ENCODE measurements at regions of chr10 and their contacts with region 1.

Region 1: GRCh38 chr10:60032723-60033122 is 126.4 kb upstream of the CCDC6 start:
- DNase-seq: peak; percentile 60
- H3K4me3 ChIP-seq: no peak overlapping the region
- H3K27ac ChIP-seq: no peak overlapping the region
- H3K4me1 ChIP-seq: peaks cover 0 to 22% (median 8%) of the 10 kb centered on the region in 4 donors
- H3K27me3 ChIP-seq: no peaks in the 10 kb centered on the region
- CTCF ChIP-seq: peak; percentile 21 to 65 (median 47)
- EP300 ChIP-seq: no peak
- POLR2A ChIP-seq: no peak

Region 2: GRCh38 chr10:59700709-59701108 is 332.0 kb before region 1 on chr10:
- in situ Hi-C with region 1: no loop called
- intact Hi-C with region 1: no loop called
- DNase-seq: no peak
- H3K4me3 ChIP-seq: no peak overlapping the region
- H3K27ac ChIP-seq: no peak overlapping the region
- H3K4me1 ChIP-seq: peaks cover 0 to 4% (median 0%) of the 10 kb centered on the region in 4 donors
- H3K27me3 ChIP-seq: no peaks in the 10 kb centered on the region
- CTCF ChIP-seq: no peak
- EP300 ChIP-seq: no peak
- POLR2A ChIP-seq: no peak

Region 3: DNA sequence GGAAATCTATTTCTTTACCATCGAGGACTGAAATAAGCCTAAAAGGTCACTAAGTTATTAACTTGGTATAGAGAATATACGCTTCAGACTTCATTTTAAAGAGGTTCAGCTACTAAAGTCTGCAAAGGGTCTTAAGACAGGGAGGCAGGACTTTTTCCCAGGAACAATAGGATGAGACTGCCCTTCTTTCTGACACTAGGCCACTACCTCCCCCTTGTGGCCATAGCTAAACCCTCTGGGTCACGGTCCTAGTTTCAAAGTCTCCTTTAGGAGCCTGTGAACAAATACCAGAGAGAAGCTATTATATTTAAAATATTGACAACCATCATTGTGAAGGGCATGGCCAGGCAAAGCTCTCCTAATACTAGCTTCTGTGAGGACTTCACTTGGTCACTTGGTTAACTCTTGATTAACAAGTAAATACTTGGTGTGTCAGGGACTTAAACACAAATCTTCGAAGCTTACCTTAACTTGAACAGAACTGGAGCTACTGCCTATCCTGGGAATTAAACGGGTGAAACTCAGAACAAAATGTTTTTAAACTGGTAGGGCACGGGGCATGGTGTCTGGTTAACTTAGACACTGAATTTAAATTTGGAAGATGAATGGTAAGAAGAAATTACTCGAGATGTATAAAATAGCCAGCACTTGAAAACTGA is 202.0 kb before region 1 on chr10:
- in situ Hi-C with region 1: loop called in 3 of 4 experiments (anchors 10 to 25 kb)
- intact Hi-C with region 1: no loop called
- DNase-seq: peak; percentile 46
- H3K4me3 ChIP-seq: no peak overlapping the region
- H3K27ac ChIP-seq: no peak overlapping the region
- H3K4me1 ChIP-seq: peaks cover 4 to 23% (median 14%) of the 10 kb centered on the region in 4 donors
- H3K27me3 ChIP-seq: no peaks in the 10 kb centered on the region
- CTCF ChIP-seq: peak; percentile 46 to 79 (median 75)
- EP300 ChIP-seq: no peak
- POLR2A ChIP-seq: no peak

Region 4: GRCh38 chr10:60172363-60172990 is 139.8 kb after region 1 on chr10:
- in situ Hi-C with region 1: no loop called
- intact Hi-C with region 1: no loop called
- DNase-seq: no peak
- H3K4me3 ChIP-seq: no peak overlapping the region
- H3K27ac ChIP-seq: no peak overlapping the region
- H3K4me1 ChIP-seq: peaks cover 0 to 11% (median 6%) of the 10 kb centered on the region in 4 donors
- H3K27me3 ChIP-seq: no peaks in the 10 kb centered on the region
- CTCF ChIP-seq: no peak
- EP300 ChIP-seq: no peak
- POLR2A ChIP-seq: no peak

Region 5: GRCh38 chr10:61812052-61812721 is 1779.5 kb after region 1 on chr10:
- in situ Hi-C with region 1: no loop called
- intact Hi-C with region 1: no loop called
- DNase-seq: no peak
- H3K4me3 ChIP-seq: no peak overlapping the region
- H3K27ac ChIP-seq: no peak overlapping the region
- H3K4me1 ChIP-seq: no peaks in the 10 kb centered on the region
- H3K27me3 ChIP-seq: no peaks in the 10 kb centered on the region
- CTCF ChIP-seq: no peak
- EP300 ChIP-seq: no peak
- POLR2A ChIP-seq: no peak